ENCODE measurements at regions of chr10 and their contacts with region 1.

Region 1: DNA sequence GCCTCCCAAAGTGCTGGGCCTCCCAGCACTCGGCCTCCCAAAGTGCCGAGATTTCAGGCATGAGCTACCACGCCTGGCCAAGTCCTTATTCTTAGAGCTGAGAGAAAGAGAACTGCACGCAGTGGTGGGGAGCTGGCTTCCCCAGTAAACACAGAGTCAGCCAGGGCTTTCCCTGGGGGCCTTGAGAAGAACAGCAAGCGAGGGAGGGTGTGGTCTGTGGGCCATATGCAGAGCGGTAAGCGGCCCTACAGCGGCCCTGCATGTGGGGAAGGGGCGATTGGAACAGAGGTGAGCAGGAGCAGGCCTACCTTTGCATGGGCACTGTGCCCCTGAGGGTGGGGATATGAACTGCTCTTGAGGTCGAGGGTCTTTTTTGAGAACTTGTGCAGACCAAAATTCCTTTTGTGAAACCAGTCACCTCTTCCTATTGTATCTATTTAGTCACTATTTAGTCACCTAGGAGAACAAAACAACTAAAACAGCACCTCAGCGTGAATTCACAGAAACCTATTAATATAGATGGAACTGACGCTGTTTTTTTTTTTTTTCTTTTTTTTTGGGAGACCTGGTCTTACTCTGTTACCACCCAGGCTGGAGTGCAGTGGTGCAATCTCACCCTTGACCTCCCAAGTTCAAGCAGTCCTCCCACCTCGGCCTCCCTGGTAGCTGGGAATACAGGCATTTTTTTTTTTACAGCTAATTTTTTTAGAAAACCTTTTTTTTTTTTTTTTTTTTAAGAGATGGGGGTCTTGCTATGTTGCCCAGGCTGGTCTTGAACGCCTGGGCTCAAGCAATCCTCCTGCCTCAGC is 36.9 kb upstream of the SH2D4B start:
- DNase-seq: peak; percentile 73

Region 2: DNA sequence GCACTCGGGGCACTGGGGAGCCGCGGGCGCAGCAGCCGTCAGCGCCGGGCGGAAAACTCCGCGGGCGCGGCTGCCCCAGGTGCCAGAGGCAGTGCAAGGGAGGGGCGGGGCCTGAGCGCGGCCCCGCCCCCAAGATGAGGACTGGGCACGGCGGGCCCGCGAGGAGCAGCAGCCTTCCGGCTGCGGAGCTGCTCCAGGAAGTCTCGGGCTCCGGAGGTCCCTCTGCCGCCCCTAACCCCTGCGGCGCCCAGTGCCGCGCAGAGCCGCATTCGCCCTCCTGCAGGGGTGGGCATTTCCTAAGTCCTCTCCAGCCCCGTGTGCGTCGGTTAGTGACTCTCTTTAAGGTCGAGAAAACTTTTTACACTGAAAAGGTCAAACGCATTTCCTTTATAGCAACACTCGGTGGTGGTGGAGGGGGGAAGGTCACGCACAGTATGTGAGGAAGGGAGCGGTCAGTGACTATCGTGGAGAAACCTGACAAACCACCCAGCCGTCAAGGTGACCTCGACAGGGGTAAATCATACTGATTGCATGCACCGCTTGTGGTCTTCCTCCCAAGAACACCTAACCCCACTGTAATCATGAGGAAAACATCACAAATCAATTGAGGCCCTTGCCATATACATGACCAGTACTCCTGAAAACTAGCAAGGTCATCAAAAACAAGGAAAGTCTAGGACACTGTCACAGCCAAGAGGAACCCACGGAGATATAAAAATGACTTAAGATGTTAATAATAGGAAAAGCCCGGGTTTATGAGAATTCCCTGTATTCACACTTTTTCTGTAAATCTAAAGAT is 295.1 kb before region 1 on chr10 and contains the start of gene ANXA11:
- intact Hi-C with region 1: no loop called
- DNase-seq: peak; percentile 92
- total RNA-seq, gene ANXA11: 406 TPM

Region 3: GRCh38 chr10:80444646-80445319 is 56.0 kb before region 1 on chr10:
- intact Hi-C with region 1: loop called (anchors 1 kb)
- DNase-seq: no peak

Measured in cardiac septum (tissue), 1 donor.